Ascending aorta (tissue), 2 donors: ENCODE measurements at regions of chr2 and their contacts with region 1.

Region 1: GRCh38 chr2:239223310-239224198 is 177.3 kb downstream of the HDAC4 start:
- DNase-seq: peak in 1 of 2 donors; percentile 87
- H3K4me3 ChIP-seq: peak overlapping the region in 1 of 2 donors; percentile 55
- H3K27ac ChIP-seq: peak overlapping the region; percentile 83 to 96
- H3K4me1 ChIP-seq: peaks cover 24 to 60% of the 10 kb centered on the region in 2 donors
- H3K27me3 ChIP-seq: no peaks in the 10 kb centered on the region
- CTCF ChIP-seq: no peak

Region 2: GRCh38 chr2:237766340-237766739 is 1457.2 kb before region 1 on chr2:
- intact Hi-C with region 1: no loop called
- DNase-seq: no peak
- H3K4me3 ChIP-seq: no peak overlapping the region
- H3K27ac ChIP-seq: peak overlapping the region; percentile 62 to 75
- H3K4me1 ChIP-seq: peaks cover 5 to 8% of the 10 kb centered on the region in 2 donors
- H3K27me3 ChIP-seq: no peaks in the 10 kb centered on the region
- CTCF ChIP-seq: no peak

Region 3: GRCh38 chr2:239267288-239267951 is 43.9 kb after region 1 on chr2:
- intact Hi-C with region 1: loop called (anchors 2 kb)
- DNase-seq: peak; percentile 70 to 89
- H3K4me3 ChIP-seq: peak overlapping the region in 1 of 2 donors; percentile 14
- H3K27ac ChIP-seq: peak overlapping the region; percentile 81 to 87
- H3K4me1 ChIP-seq: peaks cover 23 to 47% of the 10 kb centered on the region in 2 donors
- H3K27me3 ChIP-seq: no peaks in the 10 kb centered on the region
- CTCF ChIP-seq: peak in 2 of 3 experiments; percentile 38 to 53

Region 4: GRCh38 chr2:239293775-239294430 is 70.3 kb after region 1 on chr2:
- intact Hi-C with region 1: loop called (anchors 2 kb)
- DNase-seq: no peak
- H3K4me3 ChIP-seq: no peak overlapping the region
- H3K27ac ChIP-seq: no peak overlapping the region
- H3K4me1 ChIP-seq: peaks cover 0 to 23% of the 10 kb centered on the region in 2 donors
- H3K27me3 ChIP-seq: no peaks in the 10 kb centered on the region
- CTCF ChIP-seq: no peak

Region 5: DNA sequence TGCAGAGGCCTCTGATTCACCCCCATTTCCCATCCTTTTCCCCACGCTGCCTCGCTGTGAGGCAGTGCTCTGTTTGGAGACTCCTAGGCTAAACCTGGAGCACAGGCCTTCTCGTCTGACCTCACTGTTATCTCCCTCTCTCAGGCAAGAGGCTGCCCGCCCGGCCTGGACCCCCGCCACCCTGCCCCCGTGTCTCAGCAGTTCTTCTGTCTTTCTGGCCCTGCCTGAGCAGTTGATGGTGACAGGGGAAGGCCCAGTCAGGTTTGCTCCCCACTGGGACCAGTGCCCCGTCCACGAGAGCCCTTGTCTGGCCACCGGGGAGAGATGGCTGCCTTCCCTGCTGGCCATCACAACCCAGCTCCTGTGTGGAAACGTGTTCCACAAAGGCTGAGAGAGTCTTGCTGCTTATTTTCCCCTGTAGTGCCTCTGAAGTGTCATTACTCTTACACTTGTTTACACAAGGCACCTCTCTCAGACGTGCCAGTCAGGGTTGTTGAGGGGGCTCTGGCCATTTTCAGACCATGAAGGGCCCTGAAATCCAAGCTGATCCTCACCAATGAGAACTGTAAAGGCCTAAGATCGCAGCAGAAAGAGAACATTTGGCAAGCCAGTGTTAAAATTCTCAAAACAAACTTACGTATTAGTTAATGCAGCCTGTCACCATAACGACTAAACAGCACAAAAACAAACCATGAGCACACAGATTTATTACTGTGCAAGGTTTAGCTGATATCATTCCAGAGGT is 590.7 kb after region 1 on chr2:
- intact Hi-C with region 1: loop called (anchors 10 kb)
- DNase-seq: peak in 1 of 2 donors; percentile 75
- H3K4me3 ChIP-seq: peak overlapping the region in 1 of 2 donors; percentile 48
- H3K27ac ChIP-seq: peak overlapping the region; percentile 91 to 96
- H3K4me1 ChIP-seq: peaks cover 22 to 50% of the 10 kb centered on the region in 2 donors
- H3K27me3 ChIP-seq: no peaks in the 10 kb centered on the region
- CTCF ChIP-seq: no peak

Region 6: DNA sequence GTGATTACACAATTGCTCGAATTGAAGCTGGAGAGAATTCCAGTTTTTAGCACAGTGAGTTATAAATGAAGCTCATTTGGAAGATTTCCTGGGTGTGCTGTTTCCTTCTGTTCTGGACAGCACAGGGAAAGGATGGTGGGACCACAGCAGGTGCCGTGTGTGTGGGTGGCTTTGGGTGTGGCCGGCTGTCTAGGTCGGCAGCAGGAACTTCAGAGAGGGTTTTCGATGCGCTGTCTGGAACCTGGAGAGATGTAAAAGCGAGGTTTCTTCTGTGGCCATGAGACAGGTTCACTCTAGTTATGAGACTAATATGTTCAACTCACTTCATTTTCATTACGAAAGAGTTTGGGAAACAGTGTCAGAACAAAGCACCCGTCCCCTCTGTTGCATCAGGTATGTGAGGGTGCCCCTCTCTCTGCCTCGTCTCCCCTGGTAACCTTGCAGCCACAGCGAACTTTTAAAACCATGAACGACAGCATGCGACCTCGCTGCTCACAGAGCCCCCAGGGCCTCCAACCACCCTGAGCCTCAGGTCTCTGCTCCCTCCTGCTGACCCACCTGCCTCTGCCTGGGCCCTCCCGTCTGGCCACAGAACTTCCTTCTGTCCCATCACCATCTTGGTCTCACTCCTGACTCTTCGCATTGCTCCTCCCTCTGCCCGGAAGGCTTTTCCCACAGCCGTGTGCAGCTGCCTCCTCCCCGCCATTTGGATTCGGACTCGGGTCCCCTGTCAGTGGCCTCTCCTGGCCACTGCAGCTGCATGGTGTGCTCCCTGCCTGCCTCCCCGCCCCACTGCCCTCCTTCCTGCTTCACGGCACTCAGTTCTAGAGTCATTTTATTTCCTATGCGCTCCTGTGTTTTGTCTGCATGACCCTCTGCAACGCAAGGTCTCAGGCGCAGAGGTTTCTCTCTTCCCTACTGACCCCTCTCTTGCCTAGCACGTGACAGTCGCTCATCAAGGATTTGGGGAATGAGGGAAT is 650.4 kb after region 1 on chr2:
- intact Hi-C with region 1: no loop called
- DNase-seq: no peak
- H3K4me3 ChIP-seq: no peak overlapping the region
- H3K27ac ChIP-seq: no peak overlapping the region
- H3K4me1 ChIP-seq: no peaks in the 10 kb centered on the region
- H3K27me3 ChIP-seq: no peaks in the 10 kb centered on the region
- CTCF ChIP-seq: no peak